ENCODE measurements at regions of chr20 and their contacts with region 1.

Region 1: GRCh38 chr20:58236612-58237330 is 8.3 kb upstream of the ANKRD60 start:
- DNase-seq: peak; percentile 63 to 95 (median 70)
- ATAC-seq: peak; percentile 98
- H3K4me3 ChIP-seq: peak overlapping the region; percentile 41
- H3K27ac ChIP-seq: peak overlapping the region in 1 of 2 donors; percentile 21
- H3K4me1 ChIP-seq: peaks cover 0 to 13% of the 10 kb centered on the region in 2 donors
- H3K27me3 ChIP-seq: no peaks in the 10 kb centered on the region
- CTCF ChIP-seq: peak; percentile 96

Region 2: DNA sequence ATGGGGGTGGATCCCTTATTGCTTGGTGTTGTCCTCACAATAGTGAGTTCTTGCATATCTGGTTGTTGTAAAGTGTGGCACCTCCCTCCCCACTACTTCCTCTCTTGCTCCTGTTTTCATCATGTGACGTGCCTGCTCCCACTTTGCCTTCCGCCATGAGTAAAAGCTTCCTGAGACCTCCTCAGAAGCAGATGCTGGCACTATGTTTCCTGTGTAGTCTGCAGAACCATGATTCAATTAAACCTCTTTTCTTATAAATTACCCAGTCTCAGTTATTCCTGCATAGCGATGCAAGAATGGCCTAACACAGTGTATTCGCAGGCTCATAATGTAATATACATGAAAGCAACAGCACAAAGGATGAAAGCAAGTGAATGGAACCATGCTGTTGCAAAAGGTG is 20.1 kb after region 1 on chr20:
- intact Hi-C with region 1: no loop called
- DNase-seq: no peak
- ATAC-seq: peak; percentile 17
- H3K4me3 ChIP-seq: no peak overlapping the region
- H3K27ac ChIP-seq: no peak overlapping the region
- H3K4me1 ChIP-seq: peaks cover 0 to 5% of the 10 kb centered on the region in 2 donors
- H3K27me3 ChIP-seq: no peaks in the 10 kb centered on the region
- CTCF ChIP-seq: no peak

Region 3: DNA sequence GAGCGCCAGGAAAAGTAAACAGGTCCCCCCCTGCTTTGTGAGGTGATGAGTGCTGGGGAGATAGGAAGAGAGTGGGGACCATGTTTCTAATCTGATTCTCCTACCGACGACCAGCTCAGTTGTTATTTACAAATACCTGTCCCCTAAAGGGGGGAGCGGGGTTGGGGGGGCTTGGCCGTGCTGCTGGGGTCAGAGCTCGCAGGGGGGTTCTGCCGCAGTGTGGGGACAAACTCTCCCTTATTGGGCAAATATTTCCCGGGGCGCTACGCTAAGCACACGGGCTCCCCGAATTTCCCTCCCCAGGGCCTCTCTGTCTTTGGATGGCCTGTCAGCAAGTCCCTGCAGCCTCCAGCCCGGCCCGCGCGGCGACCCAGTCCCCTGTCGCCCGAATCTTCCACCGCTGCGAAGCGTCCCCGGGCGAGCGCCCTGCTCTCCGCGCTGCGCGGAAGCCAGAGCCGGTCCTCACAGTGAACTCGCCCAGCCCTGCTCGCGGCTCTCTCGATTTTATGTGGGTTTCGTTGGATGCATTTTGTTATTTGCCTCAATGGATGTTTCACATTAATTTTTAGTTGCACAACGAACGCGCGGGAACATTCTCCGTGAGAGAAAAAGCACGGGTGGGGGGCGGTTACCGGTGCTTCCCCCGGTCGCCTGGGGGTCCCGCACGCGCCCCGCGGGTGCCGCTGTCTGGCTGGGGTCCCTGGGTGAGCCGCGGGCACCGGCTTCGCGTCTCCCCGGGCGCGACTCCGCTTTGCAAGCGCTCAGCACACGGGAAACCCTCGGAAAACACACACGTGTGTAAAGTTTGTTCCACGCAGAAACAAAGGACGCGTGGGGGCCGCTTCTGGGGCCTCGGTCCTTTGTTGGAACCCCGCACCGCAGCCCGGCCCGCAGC is 412.8 kb after region 1 on chr20:
- intact Hi-C with region 1: loop called in 1 of 2 experiments (anchors 10 kb)
- DNase-seq: peak in 2 of 4 donors; percentile 22 to 88
- ATAC-seq: no peak
- H3K4me3 ChIP-seq: peak overlapping the region; percentile 83 to 97
- H3K27ac ChIP-seq: peak overlapping the region; percentile 94 to 95
- H3K4me1 ChIP-seq: peaks cover 20 to 27% of the 10 kb centered on the region in 2 donors
- H3K27me3 ChIP-seq: peaks cover 0 to 8% of the 10 kb centered on the region in 2 donors
- CTCF ChIP-seq: no peak

Measured in left lung (tissue), 14 donors.